ENCODE measurements at regions of chr22 and their contacts with region 1.

Region 1: GRCh38 chr22:38656256-38657044 is at the starts of genes CBY1 and FAM227A:
- DNase-seq: peak; percentile 93
- ATAC-seq: peak; percentile 83
- H3K4me3 ChIP-seq: peak within 1 kb of the TSS; percentile 79 to 89 (median 85)
- H3K4me3 Mint-ChIP-seq: peak within 1 kb of the TSS; percentile 94
- H3K27ac ChIP-seq: peak within 1 kb of the TSS; percentile 78 to 98
- H3K27ac Mint-ChIP-seq: peak within 1 kb of the TSS; percentile 99
- H3K4me1 ChIP-seq: peaks cover 13 to 15% of the 10 kb centered on the region in 2 donors
- H3K4me1 Mint-ChIP-seq: peaks cover 15% of the 10 kb centered on the region
- H3K27me3 ChIP-seq: no peaks in the 10 kb centered on the region
- H3K27me3 Mint-ChIP-seq: no peaks in the 10 kb centered on the region
- CTCF ChIP-seq: no peak
- total RNA-seq, gene CBY1: 20.7 and 21.7 TPM in 2 replicates
- total RNA-seq, gene FAM227A: 0.57 and 1.1 TPM in 2 replicates

Region 2: GRCh38 chr22:38506118-38506962 is 150.1 kb before region 1 on chr22 and contains the start of gene DDX17:
- CTCF ChIA-PET with region 1: no interaction called
- POLR2A ChIA-PET with region 1: no interaction called
- intact Hi-C with region 1: loop called (anchors 10 kb)
- DNase-seq: peak; percentile 99
- ATAC-seq: peak; percentile 87
- H3K4me3 ChIP-seq: peak within 1 kb of the TSS; percentile 78 to 99 (median 93)
- H3K4me3 Mint-ChIP-seq: peak within 1 kb of the TSS; percentile 99
- H3K27ac ChIP-seq: peak within 1 kb of the TSS; percentile 98
- H3K27ac Mint-ChIP-seq: peak within 1 kb of the TSS; percentile 100
- H3K4me1 ChIP-seq: peaks cover 39 to 40% of the 10 kb centered on the region in 2 donors
- H3K4me1 Mint-ChIP-seq: peaks cover 51% of the 10 kb centered on the region
- H3K27me3 ChIP-seq: no peaks in the 10 kb centered on the region
- H3K27me3 Mint-ChIP-seq: no peaks in the 10 kb centered on the region
- CTCF ChIP-seq: no peak
- total RNA-seq, gene DDX17: 936 and 967 TPM in 2 replicates

Region 3: DNA sequence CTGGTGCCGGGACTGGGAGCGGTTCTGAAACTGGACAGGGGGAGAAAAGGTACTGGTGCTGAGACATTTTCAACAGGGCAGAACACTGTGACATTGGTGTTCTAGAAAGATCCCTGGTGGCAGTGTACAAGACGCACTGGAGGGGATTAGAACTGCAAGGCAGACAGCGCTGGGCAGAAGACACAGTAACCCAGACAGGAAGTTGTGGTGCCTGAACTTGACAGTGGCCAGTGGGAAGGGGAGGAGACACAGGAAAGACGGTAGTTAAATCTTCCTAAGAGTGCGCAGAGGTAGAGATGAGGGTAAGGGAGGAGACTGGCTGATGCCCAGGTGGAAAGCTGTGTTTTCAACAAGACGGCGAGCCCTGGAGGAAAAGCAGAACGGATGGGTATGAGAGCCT is 24.7 kb before region 1 on chr22:
- CTCF ChIA-PET with region 1: no interaction called
- POLR2A ChIA-PET with region 1: no interaction called
- intact Hi-C with region 1: no loop called
- DNase-seq: no peak
- ATAC-seq: no peak
- H3K4me3 ChIP-seq: no peak overlapping the region
- H3K4me3 Mint-ChIP-seq: no peak overlapping the region
- H3K27ac ChIP-seq: no peak overlapping the region
- H3K27ac Mint-ChIP-seq: no peak overlapping the region
- H3K4me1 ChIP-seq: no peaks in the 10 kb centered on the region
- H3K4me1 Mint-ChIP-seq: no peaks in the 10 kb centered on the region
- H3K27me3 ChIP-seq: no peaks in the 10 kb centered on the region
- H3K27me3 Mint-ChIP-seq: peaks cover 17% of the 10 kb centered on the region
- CTCF ChIP-seq: no peak

Region 4: GRCh38 chr22:38681784-38682335 is 25.4 kb after region 1 on chr22 and contains the start of gene TOMM22:
- CTCF ChIA-PET with region 1: interaction called, 16 read pairs
- POLR2A ChIA-PET with region 1: interaction called, 6 read pairs
- intact Hi-C with region 1: loop called (anchors 1 kb)
- DNase-seq: peak; percentile 91
- ATAC-seq: peak; percentile 98
- H3K4me3 ChIP-seq: peak within 1 kb of the TSS; percentile 78 to 96 (median 87)
- H3K4me3 Mint-ChIP-seq: peak within 1 kb of the TSS; percentile 100
- H3K27ac ChIP-seq: peak within 1 kb of the TSS; percentile 70 to 88
- H3K27ac Mint-ChIP-seq: peak within 1 kb of the TSS; percentile 96
- H3K4me1 ChIP-seq: peaks cover 11 to 15% of the 10 kb centered on the region in 2 donors
- H3K4me1 Mint-ChIP-seq: peaks cover 22% of the 10 kb centered on the region
- H3K27me3 ChIP-seq: no peaks in the 10 kb centered on the region
- H3K27me3 Mint-ChIP-seq: no peaks in the 10 kb centered on the region
- CTCF ChIP-seq: peak; percentile 72
- total RNA-seq, gene TOMM22: 47.6 and 48.2 TPM in 2 replicates

Measured in B cell (primary cell).